ENCODE measurements at regions of chr1 and their contacts with region 1.

Region 1: DNA sequence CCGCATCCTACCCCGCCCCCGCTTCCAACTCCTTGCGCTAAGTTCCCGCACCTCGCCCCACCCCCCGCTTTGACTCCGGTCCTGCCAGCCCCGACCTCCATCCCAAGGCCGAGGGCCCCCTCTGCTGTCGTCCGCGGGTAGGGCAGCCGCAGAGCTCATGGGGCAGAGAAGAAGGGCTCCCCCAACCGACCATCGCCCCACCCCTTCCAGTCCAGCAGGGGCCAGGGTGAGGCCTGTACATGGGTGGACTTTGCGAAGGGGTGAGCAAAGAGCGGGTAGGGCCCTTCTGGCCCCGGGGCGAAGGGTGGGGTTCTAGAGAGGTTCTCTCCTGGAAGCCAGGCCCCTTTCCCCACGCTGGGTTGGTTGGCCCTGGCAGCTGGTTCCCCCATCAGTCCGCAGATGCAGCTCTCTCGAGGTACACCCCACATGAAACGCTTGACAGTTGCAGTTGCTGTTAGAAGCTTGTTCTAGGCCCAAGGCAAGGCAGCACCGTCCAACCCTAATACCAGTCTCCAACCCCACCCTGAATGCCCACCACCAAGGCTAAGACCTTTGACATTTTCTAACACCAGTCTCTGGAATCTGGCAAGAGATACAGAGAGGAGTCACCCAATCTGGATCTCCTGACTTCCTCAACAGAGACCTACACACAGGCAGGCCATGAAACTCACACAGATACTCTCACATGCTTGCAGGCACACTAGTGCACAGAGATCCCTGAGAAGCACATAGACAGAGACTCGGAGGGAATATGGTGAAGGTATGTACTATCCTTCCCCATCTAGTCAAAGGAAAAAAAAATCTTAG is 25.3 kb upstream of the ADGRB2 start:
- DNase-seq: peak; percentile 96
- H3K4me3 Mint-ChIP-seq: peak overlapping the region; percentile 80
- H3K27ac Mint-ChIP-seq: no peak overlapping the region
- H3K4me1 Mint-ChIP-seq: peaks cover 13% of the 10 kb centered on the region
- H3K27me3 Mint-ChIP-seq: no peaks in the 10 kb centered on the region

Region 2: GRCh38 chr1:31644560-31645273 is 144.7 kb before region 1 on chr1 and contains the start of gene PEF1:
- CTCF ChIA-PET with region 1: interaction called, 17 read pairs
- POLR2A ChIA-PET with region 1: no interaction called
- DNase-seq: peak; percentile 99
- H3K4me3 Mint-ChIP-seq: peak within 1 kb of the TSS; percentile 94
- H3K27ac Mint-ChIP-seq: peak within 1 kb of the TSS; percentile 100
- H3K4me1 Mint-ChIP-seq: peaks cover 34% of the 10 kb centered on the region
- H3K27me3 Mint-ChIP-seq: no peaks in the 10 kb centered on the region
- total RNA-seq, gene PEF1: 50.4 to 51.6 TPM

Region 3: DNA sequence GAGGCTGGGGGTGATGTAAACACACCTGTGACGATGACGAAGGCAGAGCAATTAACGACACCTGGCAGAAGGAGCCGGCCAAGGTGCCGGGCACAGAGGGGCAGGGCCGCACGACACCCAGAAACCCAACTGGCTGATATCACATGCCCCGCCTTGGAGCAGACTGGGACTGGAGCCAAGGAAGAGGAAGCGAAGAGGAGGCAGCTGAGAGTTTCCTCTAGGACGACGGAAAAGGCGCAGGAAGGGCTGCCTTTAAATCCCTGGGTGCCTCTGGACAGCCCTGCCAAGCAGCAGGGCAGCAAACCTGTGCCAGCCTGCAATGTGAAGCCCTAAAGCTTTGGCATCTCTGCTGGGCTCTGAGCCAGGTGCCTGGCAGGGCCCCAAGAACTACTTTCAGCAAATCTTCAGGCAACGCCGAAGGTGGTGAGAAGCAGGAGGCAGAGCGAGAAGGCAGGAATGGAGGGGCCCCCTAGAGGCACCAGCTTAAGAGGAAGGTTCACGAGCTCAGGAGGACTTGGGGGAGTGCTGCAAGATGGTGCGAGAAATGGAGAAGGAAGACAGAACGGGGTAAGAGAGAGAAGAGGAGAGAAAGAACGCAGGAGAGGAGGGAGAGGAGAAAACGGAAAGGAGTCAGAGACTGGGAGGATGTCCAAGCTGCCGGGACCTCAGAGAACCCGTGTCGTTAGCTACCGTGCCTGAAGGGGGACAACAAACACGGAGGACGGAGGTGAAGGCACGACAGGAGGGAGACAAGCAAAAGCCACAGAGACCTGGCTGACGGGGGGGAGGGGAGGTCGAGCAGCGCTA is 119.5 kb before region 1 on chr1:
- CTCF ChIA-PET with region 1: interaction called, 22 read pairs
- POLR2A ChIA-PET with region 1: no interaction called
- DNase-seq: peak; percentile 11
- H3K4me3 Mint-ChIP-seq: no peak overlapping the region
- H3K27ac Mint-ChIP-seq: no peak overlapping the region
- H3K4me1 Mint-ChIP-seq: peaks cover 5% of the 10 kb centered on the region
- H3K27me3 Mint-ChIP-seq: peaks cover 18% of the 10 kb centered on the region

Region 4: DNA sequence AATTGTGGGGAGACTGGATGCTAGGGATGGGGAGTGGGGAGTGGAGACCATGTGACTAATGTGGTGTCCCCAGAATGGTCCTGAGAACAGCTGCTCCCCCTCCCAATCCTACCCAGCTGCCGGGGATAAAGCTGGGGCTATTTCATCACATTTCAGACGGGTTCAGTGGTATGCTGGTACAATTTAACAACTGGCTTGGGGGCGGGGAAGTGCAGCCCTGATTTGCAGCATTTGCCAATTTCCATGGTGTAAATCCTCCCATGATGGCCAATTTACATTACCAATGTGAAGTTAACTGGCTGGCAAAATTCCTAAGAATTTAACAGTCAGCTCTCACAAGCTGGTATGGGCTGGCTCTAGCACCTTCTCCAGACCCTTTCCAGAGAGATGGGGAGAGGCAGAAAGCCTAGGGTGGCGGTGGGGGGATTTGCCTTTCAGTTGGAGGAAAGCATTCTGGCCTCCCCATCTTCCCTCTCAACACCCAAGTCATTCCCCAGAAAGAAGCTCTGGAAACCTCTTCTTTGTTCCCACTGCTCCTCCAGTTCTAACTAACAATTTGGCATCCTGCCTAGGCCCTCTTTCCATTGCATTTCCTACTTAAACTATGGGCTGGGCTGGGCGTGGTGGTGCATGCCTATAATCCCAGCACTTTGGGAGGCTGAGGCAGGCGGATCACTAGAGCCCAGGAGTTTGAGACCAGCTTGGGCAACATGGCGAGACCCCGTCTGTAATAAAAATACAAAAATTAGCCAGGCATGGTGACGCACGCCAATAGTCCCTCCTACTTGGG is 14.1 kb before region 1 on chr1:
- CTCF ChIA-PET with region 1: interaction called, 35 read pairs
- POLR2A ChIA-PET with region 1: no interaction called
- DNase-seq: no peak
- H3K4me3 Mint-ChIP-seq: no peak overlapping the region
- H3K27ac Mint-ChIP-seq: no peak overlapping the region
- H3K4me1 Mint-ChIP-seq: peaks cover 25% of the 10 kb centered on the region
- H3K27me3 Mint-ChIP-seq: peaks cover 43% of the 10 kb centered on the region

Region 5: DNA sequence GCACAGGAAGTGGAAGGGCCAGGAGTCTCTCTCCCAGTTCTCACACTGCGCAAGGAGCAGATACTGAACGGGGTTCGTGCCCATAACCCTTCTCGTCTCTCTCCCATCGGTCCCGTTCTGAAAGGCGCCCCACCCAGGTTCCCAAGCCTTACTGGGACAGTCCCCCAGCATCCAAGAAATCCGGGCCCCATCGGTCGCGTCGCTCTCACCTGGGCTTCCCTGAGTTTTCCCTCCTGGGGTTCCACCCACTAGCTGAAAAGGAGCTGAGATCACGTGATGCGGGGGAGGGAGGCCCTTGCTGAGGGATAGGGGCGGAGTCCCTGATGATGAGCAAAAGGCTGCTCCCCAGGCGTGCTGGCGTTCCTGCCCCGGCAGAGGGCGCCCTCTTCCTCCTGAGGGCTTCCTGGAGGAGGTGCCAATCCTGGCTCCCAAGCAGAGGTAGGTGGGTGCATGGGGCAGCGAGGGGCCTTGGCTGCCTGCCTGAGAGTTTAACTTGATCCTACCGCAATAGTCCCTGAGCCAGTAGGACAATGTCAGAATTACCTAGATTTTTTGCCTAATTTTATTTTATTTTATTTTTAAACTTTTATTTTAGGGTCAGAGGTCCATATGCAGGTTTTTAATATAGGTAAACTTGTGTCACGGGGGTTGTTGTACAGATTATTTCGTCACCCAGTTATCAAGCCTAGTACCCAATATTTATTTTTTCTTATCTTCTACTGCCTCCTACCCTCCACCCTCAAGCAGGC is 26.5 kb after region 1 on chr1 and contains the start of gene SPOCD1:
- CTCF ChIA-PET with region 1: interaction called, 20 read pairs
- POLR2A ChIA-PET with region 1: no interaction called
- DNase-seq: peak; percentile 88
- H3K4me3 Mint-ChIP-seq: no peak within 1 kb of the TSS
- H3K27ac Mint-ChIP-seq: no peak within 1 kb of the TSS
- H3K4me1 Mint-ChIP-seq: peaks cover 14% of the 10 kb centered on the region
- H3K27me3 Mint-ChIP-seq: no peaks in the 10 kb centered on the region
- total RNA-seq, gene SPOCD1: 0.08 to 0.25 TPM

Measured in activated CD4-positive, alpha-beta T cell treated with anti-CD3 and anti-CD28 coated beads, Interleukin-2, amount 10 ng/mL, durations not matched to agents 7 days and 5 days (primary cell).